ENCODE measurements at regions of chr7 and their contacts with region 1.

Region 1: DNA sequence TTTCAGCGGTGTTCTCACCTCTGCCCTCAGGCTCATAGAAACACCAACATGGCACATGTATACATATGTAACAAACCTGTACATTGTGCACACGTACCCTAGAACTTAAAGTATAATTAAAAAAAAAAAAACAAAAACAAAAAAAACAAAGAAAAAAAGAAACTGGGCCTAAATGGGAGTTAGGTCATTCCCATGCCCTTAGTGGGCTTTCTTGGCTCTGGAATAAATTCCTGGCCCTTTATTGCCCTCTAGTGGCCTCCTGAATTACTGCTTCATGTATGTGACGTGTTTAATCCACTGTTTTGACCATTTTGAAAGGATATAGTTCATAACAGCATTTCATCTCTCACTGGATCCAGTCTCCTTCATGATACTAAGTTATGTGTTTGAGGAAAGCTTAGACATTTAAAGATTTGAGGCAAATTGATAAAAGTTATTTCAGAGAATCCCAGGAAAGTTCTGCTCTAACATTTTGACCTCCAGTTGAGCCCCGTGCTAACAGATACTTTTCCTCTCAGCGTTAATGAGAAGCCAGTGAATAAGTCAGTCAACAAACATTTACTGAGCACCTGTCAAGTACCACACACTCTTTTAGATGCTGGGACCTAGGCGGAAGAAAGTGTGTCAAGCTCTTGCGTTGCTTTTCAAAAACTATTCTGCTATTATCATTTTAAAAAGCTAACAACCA is 54.7 kb upstream of the SYPL1 start:
- DNase-seq: peak; percentile 79
- H3K4me3 ChIP-seq: no peak overlapping the region
- H3K27ac ChIP-seq: no peak overlapping the region
- H3K4me1 ChIP-seq: peaks cover 14% of the 10 kb centered on the region
- CTCF ChIP-seq: peak; percentile 95

Region 2: GRCh38 chr7:105680505-105681187 is 486.2 kb before region 1 on chr7:
- CTCF ChIA-PET with region 1: no interaction called
- POLR2A ChIA-PET with region 1: interaction called, 4 read pairs
- intact Hi-C with region 1: loop called (anchors 10 kb)
- DNase-seq: no peak
- H3K4me3 ChIP-seq: no peak overlapping the region
- H3K27ac ChIP-seq: no peak overlapping the region
- H3K4me1 ChIP-seq: peaks cover 8% of the 10 kb centered on the region
- CTCF ChIP-seq: no peak

Region 3: GRCh38 chr7:105876091-105876963 is 290.5 kb before region 1 on chr7 and contains the start of gene ATXN7L1:
- CTCF ChIA-PET with region 1: no interaction called
- POLR2A ChIA-PET with region 1: no interaction called
- intact Hi-C with region 1: loop called (anchors 10 kb)
- DNase-seq: peak; percentile 73
- H3K4me3 ChIP-seq: peak within 1 kb of the TSS; percentile 63
- H3K27ac ChIP-seq: no peak within 1 kb of the TSS
- H3K4me1 ChIP-seq: no peaks in the 10 kb centered on the region
- CTCF ChIP-seq: peak; percentile 41
- total RNA-seq, gene ATXN7L1: not detected in 2 replicates

Region 4: GRCh38 chr7:106009403-106010226 is 157.2 kb before region 1 on chr7:
- CTCF ChIA-PET with region 1: no interaction called
- POLR2A ChIA-PET with region 1: interaction called, 3 read pairs
- intact Hi-C with region 1: loop called (anchors 5 kb)
- DNase-seq: peak; percentile 47
- H3K4me3 ChIP-seq: no peak overlapping the region
- H3K27ac ChIP-seq: no peak overlapping the region
- H3K4me1 ChIP-seq: peaks cover 20% of the 10 kb centered on the region
- CTCF ChIP-seq: peak; percentile 86

Region 5: GRCh38 chr7:106277976-106278375 is 111.2 kb after region 1 on chr7:
- CTCF ChIA-PET with region 1: no interaction called
- POLR2A ChIA-PET with region 1: no interaction called
- intact Hi-C with region 1: no loop called
- DNase-seq: no peak
- H3K4me3 ChIP-seq: no peak overlapping the region
- H3K27ac ChIP-seq: no peak overlapping the region
- H3K4me1 ChIP-seq: peaks cover 17% of the 10 kb centered on the region
- CTCF ChIP-seq: no peak

Measured in OCI-LY7 (cell line).